Endothelial cell of umbilical vein (primary cell): ENCODE measurements at regions of chr11 and their contacts with region 1.

Region 1: DNA sequence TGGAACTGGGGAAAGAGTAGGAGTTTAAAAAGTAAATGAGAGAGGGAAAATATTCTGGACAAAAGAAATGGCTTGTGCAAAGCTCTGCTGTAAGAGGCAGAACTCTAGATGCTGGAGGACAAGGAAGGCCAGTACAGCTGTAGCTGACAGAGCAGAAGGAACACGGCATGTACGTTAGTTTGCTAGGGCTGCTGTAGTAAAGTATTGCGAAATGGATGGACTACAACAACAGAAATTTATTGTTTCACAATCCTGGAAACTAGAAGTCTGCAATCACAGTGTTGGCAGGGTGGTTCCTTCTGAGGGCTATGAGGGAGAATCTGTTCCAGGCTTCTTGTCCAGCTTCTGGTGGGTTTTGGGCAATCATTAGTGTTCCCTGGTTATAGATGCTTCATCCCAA is 454.4 kb downstream of the NTM start:
- DNase-seq: no peak
- H3K4me3 ChIP-seq: no peak overlapping the region
- H3K27ac ChIP-seq: no peak overlapping the region
- H3K4me1 ChIP-seq: no peaks in the 10 kb centered on the region
- H3K27me3 ChIP-seq: peaks cover 22 to 42% of the 10 kb centered on the region in 2 experiments
- CTCF ChIP-seq: no peak
- POLR2A ChIP-seq: no peak

Region 2: GRCh38 chr11:131629925-131630540 is 194.7 kb before region 1 on chr11:
- CTCF ChIA-PET with region 1: no interaction called
- POLR2A ChIA-PET with region 1: no interaction called
- dilution Hi-C with region 1: no loop called
- intact Hi-C with region 1: no loop called
- DNase-seq: no peak
- H3K4me3 ChIP-seq: no peak overlapping the region
- H3K27ac ChIP-seq: no peak overlapping the region
- H3K4me1 ChIP-seq: no peaks in the 10 kb centered on the region
- H3K27me3 ChIP-seq: no peaks in the 10 kb centered on the region
- CTCF ChIP-seq: no peak
- POLR2A ChIP-seq: no peak

Region 3: DNA sequence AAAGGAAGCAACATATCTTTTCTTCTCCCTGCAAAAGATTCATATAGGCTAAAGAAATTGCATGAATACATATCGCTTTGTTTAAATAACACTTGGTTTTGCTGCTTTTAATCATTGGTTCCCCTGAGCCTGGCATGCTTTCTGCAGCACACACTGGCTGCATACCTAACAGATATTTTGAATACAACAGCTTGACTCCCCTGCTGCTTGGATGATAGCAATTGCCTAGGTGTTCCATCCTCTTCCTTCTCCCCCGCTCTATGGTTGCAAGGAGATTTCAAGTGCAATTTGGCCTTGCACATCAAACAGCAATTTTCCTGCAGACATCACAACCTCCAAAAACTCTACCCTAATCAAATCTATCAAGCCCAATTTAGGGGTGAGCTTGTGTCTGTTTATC is 24.3 kb before region 1 on chr11:
- CTCF ChIA-PET with region 1: no interaction called
- POLR2A ChIA-PET with region 1: no interaction called
- dilution Hi-C with region 1: no loop called
- intact Hi-C with region 1: loop called (anchors 1 kb)
- DNase-seq: no peak
- H3K4me3 ChIP-seq: no peak overlapping the region
- H3K27ac ChIP-seq: no peak overlapping the region
- H3K4me1 ChIP-seq: no peaks in the 10 kb centered on the region
- H3K27me3 ChIP-seq: peaks cover 6 to 11% of the 10 kb centered on the region in 2 experiments
- CTCF ChIP-seq: no peak
- POLR2A ChIP-seq: no peak